ENCODE measurements at regions of chr7 and their contacts with region 1.

Region 1: DNA sequence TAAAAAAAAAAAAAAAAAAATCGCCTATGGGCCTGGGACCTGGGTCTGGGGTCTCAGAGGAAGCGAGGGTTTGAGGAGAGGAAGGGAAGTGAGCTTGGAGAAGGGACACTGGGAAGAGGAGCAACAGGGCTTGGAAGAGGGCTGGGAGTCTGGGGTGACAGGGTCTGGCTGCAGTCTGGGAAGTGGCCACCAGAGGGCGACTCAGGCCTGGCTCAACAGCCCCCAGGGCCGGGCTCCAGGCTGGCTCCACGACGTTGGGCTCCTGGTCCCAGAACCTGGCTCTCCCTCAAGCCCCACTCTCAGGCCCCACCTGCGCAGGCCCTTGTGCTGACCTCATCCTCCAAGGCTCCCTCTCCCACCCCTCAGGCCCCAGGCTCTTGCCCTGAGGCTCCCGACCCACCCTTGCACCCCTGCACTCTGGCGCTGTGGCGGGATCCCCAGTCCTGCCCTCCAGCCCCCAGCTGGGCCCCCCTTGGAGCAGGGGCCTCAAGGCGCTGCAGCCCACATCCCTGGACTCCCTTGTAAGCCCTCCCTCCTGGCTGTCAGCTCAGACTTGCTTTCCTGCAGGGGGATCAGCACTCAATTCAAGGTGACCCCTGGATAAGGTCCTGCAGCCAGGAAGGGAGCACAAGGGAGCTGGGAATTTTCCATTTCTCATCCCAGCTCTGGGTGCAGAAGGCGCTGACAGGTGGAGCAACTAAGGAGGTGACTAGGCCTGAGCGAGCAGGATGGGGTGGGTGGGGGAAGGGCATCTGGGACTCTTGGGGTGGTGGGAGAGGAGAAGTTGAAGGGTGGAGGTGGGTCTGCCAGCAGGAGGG is 5.4 kb upstream of the SPACDR start:
- DNase-seq: peak; percentile 88
- H3K4me3 Mint-ChIP-seq: no peak overlapping the region
- H3K27ac Mint-ChIP-seq: peak overlapping the region; percentile 13
- H3K4me1 Mint-ChIP-seq: peaks cover 29% of the 10 kb centered on the region
- H3K27me3 Mint-ChIP-seq: no peaks in the 10 kb centered on the region

Region 2: DNA sequence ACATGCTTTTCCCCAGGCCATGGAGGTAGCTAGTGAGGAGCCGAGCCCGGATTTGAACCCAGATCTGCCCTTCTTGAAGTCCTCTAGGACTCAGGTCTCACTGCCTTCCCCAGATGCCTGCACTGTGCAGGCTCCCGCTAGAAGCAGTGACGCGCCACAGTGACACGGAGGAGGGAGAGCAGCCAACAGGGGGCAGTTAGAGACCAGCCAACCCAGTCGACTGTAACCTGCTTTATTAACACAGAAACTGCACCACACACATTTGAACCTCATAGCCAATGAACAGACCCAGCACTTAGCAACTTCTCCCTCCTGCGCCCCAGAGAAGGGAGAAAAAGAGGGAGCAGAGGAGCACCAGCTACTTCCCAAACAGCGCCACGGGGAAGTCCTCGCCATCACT is 68.8 kb before region 1 on chr7:
- CTCF ChIA-PET with region 1: no interaction called
- intact Hi-C with region 1: no loop called
- DNase-seq: peak; percentile 42
- H3K4me3 Mint-ChIP-seq: no peak overlapping the region
- H3K27ac Mint-ChIP-seq: no peak overlapping the region
- H3K4me1 Mint-ChIP-seq: peaks cover 27% of the 10 kb centered on the region
- H3K27me3 Mint-ChIP-seq: peaks cover 8% of the 10 kb centered on the region

Region 3: GRCh38 chr7:100455206-100455605 is 14.2 kb before region 1 on chr7:
- CTCF ChIA-PET with region 1: interaction called, 22 read pairs
- intact Hi-C with region 1: no loop called
- DNase-seq: no peak
- H3K4me3 Mint-ChIP-seq: no peak overlapping the region
- H3K27ac Mint-ChIP-seq: no peak overlapping the region
- H3K4me1 Mint-ChIP-seq: peaks cover 27% of the 10 kb centered on the region
- H3K27me3 Mint-ChIP-seq: no peaks in the 10 kb centered on the region

Region 4: GRCh38 chr7:100563809-100564400 is 94.5 kb after region 1 on chr7:
- CTCF ChIA-PET with region 1: interaction called, 29 read pairs
- intact Hi-C with region 1: loop called (anchors 1 kb)
- DNase-seq: peak; percentile 90
- H3K4me3 Mint-ChIP-seq: no peak overlapping the region
- H3K27ac Mint-ChIP-seq: no peak overlapping the region
- H3K4me1 Mint-ChIP-seq: peaks cover 15% of the 10 kb centered on the region
- H3K27me3 Mint-ChIP-seq: no peaks in the 10 kb centered on the region

Region 5: DNA sequence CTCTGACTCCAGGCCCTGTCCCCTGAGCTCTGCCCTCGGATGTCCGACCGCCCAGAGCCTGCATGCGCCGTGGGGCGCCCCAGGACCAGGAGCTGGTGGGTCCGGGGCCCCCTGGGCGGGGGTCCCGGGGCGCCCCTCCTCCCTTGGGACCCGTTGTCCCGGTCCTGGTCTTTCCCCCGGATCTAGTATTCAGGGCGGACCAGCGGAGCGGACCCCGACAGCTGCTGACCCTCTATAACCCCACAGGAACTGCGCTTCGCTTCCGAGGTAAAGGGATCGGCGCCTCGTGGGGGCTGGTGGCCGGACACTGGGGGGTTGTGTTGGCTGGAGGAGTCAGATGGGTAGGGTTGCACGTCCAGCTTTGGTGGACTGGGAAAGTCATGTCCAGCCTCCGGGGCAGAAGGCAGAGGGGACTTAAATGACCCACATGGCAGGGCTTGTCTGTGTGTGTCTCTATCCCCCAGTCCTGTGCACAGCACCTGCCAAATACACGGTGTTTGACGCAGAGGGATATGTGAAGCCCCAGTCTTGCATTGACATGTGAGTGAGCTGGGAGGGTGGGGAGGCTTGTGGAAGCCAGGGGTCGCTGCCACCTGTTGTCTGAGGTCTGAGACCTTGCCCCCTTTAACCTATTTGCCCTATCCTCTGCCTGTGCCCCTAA is 143.4 kb after region 1 on chr7:
- CTCF ChIA-PET with region 1: no interaction called
- intact Hi-C with region 1: no loop called
- DNase-seq: peak; percentile 51
- H3K4me3 Mint-ChIP-seq: peak overlapping the region; percentile 98
- H3K27ac Mint-ChIP-seq: peak overlapping the region; percentile 31
- H3K4me1 Mint-ChIP-seq: peaks cover 13% of the 10 kb centered on the region
- H3K27me3 Mint-ChIP-seq: no peaks in the 10 kb centered on the region

Measured in activated naive CD4-positive, alpha-beta T cell treated with anti-CD3 and anti-CD28 coated beads for 36 hours (primary cell).